Left ventricle myocardium superior (tissue), 1 donor: ENCODE measurements at regions of chr12 and their contacts with region 1.

Region 1: DNA sequence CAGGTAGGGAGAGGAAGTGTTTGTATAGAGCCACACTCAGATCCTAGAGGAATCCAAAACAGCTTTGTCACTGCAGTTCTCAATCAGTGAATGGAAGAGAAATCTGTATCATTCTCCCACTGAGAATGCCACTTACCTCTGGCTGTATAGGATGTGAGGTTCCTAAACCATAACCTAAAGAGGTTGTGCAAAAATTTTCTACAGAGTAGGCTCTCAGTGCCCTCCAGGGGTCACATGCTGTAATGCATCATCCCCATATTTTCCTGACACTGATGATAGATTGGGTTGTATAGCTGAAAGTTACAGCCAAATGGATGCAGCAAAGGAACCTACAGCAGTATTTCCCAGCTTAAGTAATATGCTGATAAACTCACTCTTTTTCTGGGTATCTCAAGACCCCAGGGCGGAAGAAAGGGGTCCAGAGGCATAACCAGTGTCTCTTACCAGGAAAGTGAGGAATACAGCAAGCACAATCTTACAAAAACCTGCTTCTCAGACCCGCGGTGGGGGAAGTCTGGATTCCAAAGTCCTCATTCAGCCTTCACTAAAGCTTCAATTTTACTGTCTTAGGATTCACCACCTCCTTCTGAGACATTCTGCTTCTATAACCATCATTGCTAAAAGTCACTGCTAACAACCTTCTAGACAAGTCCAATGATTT is 3.8 kb downstream of the BCDIN3D start:
- DNase-seq: no peak
- ATAC-seq: no peak

Region 2: GRCh38 chr12:49776413-49776812 is 62.7 kb before region 1 on chr12:
- intact Hi-C with region 1: loop called (anchors 5 kb)
- DNase-seq: peak; percentile 78
- ATAC-seq: peak; percentile 91